GM18951 (cell line): ENCODE measurements at regions of chr4 and their contacts with region 1.

Region 1: DNA sequence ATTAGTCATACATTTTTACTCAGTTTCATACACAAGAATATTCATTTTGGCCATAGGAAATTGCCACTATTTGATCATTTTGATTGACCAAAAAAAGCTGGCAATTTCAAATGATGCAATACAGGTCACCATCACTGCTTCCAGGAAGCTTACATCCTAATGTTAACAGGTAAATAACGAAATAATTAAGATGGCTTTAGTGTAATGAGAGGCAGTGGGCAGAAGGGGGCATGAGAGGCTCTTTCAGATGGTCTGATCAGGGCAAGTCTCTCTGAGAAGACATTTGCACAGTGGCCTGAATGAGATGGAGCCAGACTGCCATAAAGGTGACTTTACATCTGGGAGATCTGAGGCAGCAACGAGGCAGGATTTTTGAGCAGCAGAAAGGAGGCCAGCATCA is 170.7 kb downstream of the SLIT2 start:
- POLR2A ChIP-seq: no peak

Region 2: GRCh38 chr4:20178902-20179576 is 243.4 kb before region 1 on chr4:
- in situ Hi-C with region 1: no loop called
- POLR2A ChIP-seq: no peak

Region 3: DNA sequence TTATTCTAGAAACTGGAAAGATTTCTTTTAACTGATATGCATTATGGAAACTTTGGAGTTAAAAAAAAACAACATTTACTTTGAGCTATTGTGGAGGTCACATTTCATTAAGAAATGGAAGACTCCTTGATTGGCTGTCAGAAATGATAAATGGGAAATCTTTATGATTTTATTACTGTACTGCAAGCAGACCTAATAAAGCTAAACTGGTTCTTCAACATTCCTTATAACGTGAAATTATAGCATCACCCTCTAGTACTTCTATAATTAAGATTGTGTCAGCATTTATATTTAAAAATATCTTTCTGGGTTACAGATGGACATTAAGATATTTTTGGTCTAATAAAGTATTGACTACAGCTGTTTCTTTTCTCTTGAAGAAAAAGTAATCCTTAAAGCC is 64.0 kb after region 1 on chr4:
- in situ Hi-C with region 1: no loop called
- POLR2A ChIP-seq: no peak

Region 4: DNA sequence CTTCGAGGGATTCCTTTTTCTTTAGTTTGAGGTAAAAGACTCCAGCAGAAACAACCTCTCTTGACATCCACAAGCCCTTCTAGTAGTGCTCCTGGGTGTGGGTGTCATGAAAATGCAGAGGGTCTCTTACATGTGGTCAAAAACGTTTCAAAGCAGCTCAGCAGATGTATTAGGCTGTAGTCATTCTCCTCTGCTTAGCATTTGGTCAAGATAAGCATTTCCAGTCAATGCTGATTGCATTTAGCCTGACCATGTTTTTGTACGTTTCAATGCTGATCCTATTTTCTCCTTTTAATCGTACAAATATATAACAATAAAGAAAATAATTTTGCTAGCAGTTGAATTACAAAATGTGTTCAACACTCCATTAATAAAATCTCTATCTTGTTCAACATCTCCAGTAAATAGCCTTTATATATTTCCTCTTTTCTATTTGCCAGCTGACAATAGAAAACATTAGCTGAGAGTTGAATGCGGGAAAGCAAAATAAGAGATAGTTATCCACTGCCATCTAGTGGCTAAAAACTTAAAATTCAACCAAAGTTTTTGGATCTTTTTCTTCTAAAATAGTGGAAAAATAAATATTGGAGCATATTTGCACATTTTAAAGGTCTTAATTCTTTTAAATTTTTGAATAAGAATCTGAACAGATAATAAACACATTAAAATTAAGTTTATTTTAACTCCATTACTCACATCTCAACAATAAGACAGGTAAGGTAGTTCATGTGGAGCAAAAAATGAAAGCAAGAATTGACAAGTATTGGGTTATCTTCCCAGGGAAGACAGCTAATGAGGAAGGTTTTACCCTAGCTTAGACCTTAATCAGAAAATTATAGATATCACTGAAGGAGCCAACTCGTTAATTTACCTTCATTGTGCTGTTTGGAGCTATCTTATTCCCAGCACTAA is 262.7 kb after region 1 on chr4:
- in situ Hi-C with region 1: loop called (anchors 10 kb)
- POLR2A ChIP-seq: no peak